MCF 10A (cell line): ENCODE measurements at regions of chr16 and their contacts with region 1.

Region 1: GRCh38 chr16:51538707-51539498 is 387.8 kb upstream of the SALL1 start:
- DNase-seq: peak; percentile 93
- H3K4me3 Mint-ChIP-seq: peak overlapping the region; percentile 2
- H3K27ac Mint-ChIP-seq: no peak overlapping the region
- H3K4me1 Mint-ChIP-seq: peaks cover 26% of the 10 kb centered on the region
- H3K27me3 Mint-ChIP-seq: no peaks in the 10 kb centered on the region
- CTCF ChIP-seq: no peak

Region 2: DNA sequence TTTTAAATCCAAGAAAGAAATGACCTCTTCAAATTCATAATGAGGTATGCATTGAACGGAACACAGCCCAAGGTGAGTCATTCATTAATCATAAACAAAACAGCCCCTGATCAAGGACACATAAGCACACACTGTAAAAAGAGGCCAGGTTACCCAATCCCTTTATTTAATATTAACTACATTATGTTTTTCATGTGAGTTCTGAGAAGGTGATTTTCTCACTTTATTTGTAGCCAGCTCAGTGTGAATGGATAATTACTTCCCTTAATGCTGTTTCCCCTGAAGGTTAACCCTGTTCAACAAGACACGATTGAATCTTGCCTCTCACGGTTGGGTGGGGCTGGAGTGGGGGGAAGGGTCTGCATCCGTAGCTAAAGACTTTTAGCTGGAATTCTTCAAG is 130.5 kb before region 1 on chr16:
- CTCF ChIA-PET with region 1: interaction called, 3 read pairs
- POLR2A ChIA-PET with region 1: no interaction called
- intact Hi-C with region 1: loop called (anchors 10 kb)
- DNase-seq: peak; percentile 81
- H3K4me3 Mint-ChIP-seq: peak overlapping the region; percentile 48
- H3K27ac Mint-ChIP-seq: peak overlapping the region; percentile 94
- H3K4me1 Mint-ChIP-seq: peaks cover 58% of the 10 kb centered on the region
- H3K27me3 Mint-ChIP-seq: no peaks in the 10 kb centered on the region
- CTCF ChIP-seq: no peak

Region 3: GRCh38 chr16:51556694-51557340 is 17.9 kb after region 1 on chr16:
- CTCF ChIA-PET with region 1: interaction called, 6 read pairs
- POLR2A ChIA-PET with region 1: interaction called, 12 read pairs
- intact Hi-C with region 1: no loop called
- DNase-seq: peak; percentile 92
- H3K4me3 Mint-ChIP-seq: peak overlapping the region; percentile 64
- H3K27ac Mint-ChIP-seq: peak overlapping the region; percentile 25
- H3K4me1 Mint-ChIP-seq: peaks cover 36% of the 10 kb centered on the region
- H3K27me3 Mint-ChIP-seq: no peaks in the 10 kb centered on the region
- CTCF ChIP-seq: no peak

Region 4: GRCh38 chr16:51636920-51637769 is 98.2 kb after region 1 on chr16:
- CTCF ChIA-PET with region 1: no interaction called
- POLR2A ChIA-PET with region 1: no interaction called
- intact Hi-C with region 1: loop called (anchors 5 kb)
- DNase-seq: peak; percentile 80
- H3K4me3 Mint-ChIP-seq: peak overlapping the region; percentile 68
- H3K27ac Mint-ChIP-seq: peak overlapping the region; percentile 8
- H3K4me1 Mint-ChIP-seq: peaks cover 32% of the 10 kb centered on the region
- H3K27me3 Mint-ChIP-seq: no peaks in the 10 kb centered on the region
- CTCF ChIP-seq: no peak

Region 5: GRCh38 chr16:51982715-51983680 is 444.1 kb after region 1 on chr16:
- CTCF ChIA-PET with region 1: no interaction called
- POLR2A ChIA-PET with region 1: no interaction called
- intact Hi-C with region 1: loop called (anchors 10 kb)
- DNase-seq: peak; percentile 76
- H3K4me3 Mint-ChIP-seq: no peak overlapping the region
- H3K27ac Mint-ChIP-seq: no peak overlapping the region
- H3K4me1 Mint-ChIP-seq: peaks cover 6% of the 10 kb centered on the region
- H3K27me3 Mint-ChIP-seq: no peaks in the 10 kb centered on the region
- CTCF ChIP-seq: peak; percentile 60